ENCODE measurements at regions of chr9 and their contacts with region 1.

Region 1: DNA sequence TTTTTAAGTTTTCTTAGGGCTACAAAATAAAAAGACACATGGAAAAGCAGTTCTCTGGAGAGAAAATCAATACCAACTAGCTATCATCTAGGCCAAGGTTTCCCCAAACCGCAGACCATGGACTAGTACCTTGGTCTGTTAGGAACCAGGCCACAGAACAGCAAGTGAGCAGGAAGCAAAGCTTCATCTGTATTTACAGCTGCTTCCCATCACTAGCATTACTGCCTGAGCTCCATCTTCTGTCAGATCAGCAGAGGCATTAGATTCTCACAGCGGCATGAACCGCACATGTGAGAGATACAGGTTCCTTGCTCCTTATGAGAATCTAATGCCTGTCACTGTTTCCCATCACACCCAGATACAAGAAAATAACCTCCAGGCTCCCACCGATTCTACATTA is 1907.6 kb upstream of the ACO1 start:
- DNase-seq: no peak
- ATAC-seq: no peak
- H3K4me3 ChIP-seq: no peak overlapping the region
- H3K27ac ChIP-seq: no peak overlapping the region
- H3K4me1 ChIP-seq: no peaks in the 10 kb centered on the region
- H3K27me3 ChIP-seq: no peaks in the 10 kb centered on the region

Region 2: DNA sequence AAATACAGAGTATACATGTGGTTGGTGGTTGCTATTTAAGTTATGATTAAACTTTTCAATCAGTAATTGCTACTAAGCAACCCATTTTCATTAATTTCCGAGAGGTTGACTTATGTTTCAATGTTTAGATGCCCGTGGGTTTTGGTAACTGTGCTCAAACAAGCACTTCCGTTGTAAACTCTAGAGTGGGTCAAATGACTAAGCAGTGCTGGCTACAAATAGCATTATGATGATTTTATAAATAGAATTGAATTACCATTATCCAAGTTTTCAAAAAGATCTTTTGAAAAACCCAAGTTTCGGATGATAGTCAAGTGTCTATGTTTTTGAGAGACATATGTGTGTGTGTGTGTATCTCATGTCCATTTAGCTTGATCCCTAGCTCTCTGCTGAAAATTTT is 461.8 kb before region 1 on chr9:
- intact Hi-C with region 1: no loop called
- DNase-seq: no peak
- ATAC-seq: no peak
- H3K4me3 ChIP-seq: no peak overlapping the region
- H3K27ac ChIP-seq: no peak overlapping the region
- H3K4me1 ChIP-seq: no peaks in the 10 kb centered on the region
- H3K27me3 ChIP-seq: no peaks in the 10 kb centered on the region

Region 3: GRCh38 chr9:30201024-30201423 is 275.8 kb before region 1 on chr9:
- intact Hi-C with region 1: no loop called
- DNase-seq: no peak
- ATAC-seq: no peak
- H3K4me3 ChIP-seq: no peak overlapping the region
- H3K27ac ChIP-seq: no peak overlapping the region
- H3K4me1 ChIP-seq: no peaks in the 10 kb centered on the region
- H3K27me3 ChIP-seq: no peaks in the 10 kb centered on the region

Region 4: DNA sequence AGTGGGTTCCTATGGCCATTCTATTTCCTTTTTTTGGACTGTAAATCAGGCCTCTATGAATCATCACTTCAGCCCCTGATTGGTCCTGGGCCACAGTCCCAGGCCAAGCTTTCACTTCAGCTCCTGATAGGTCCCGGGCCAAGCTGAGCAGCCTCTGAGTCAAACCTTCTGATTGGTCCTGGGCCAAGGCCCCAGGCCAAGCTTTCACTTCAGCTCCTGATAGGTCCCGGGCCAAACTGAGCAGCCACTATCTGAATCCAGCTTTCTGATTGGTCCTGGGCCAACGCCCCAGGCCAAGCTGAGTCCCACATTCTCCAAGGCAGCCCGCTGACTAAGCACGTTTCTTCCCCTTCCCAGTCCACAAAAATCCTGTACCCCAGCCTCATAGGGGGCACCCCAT is 65.3 kb before region 1 on chr9:
- intact Hi-C with region 1: loop called in 1 of 2 experiments (anchors 10 kb)
- DNase-seq: no peak
- ATAC-seq: no peak
- H3K4me3 ChIP-seq: no peak overlapping the region
- H3K27ac ChIP-seq: no peak overlapping the region
- H3K4me1 ChIP-seq: no peaks in the 10 kb centered on the region
- H3K27me3 ChIP-seq: no peaks in the 10 kb centered on the region